Activated CD4-positive, alpha-beta T cell treated with anti-CD3 and anti-CD28 coated beads for 36 hours (primary cell): ENCODE measurements at regions of chr3 and their contacts with region 1.

Region 1: DNA sequence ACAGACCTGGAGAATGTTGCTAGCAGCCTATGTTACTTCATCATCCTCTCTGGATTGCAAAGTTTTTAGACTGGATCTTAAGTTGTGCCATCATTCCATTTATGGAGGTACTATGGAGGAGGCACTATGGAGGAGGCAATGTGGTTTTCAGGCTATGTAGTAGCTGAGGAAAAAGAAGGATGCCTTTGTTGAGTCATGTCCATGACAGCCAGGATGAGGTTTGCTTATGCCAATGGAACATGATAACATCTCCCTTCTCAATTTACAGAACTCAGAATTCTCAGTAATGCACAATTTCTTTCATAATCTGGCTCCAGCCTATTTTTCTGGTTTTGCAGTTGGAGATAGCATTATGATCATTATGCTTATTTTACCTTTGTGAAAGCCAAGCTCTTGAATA is 65.9 kb upstream of the TMEM108 start:
- DNase-seq: no peak
- ATAC-seq: no peak
- H3K4me3 Mint-ChIP-seq: no peak overlapping the region
- H3K27ac Mint-ChIP-seq: no peak overlapping the region
- H3K4me1 Mint-ChIP-seq: no peaks in the 10 kb centered on the region
- H3K27me3 Mint-ChIP-seq: peaks cover 3% of the 10 kb centered on the region

Region 2: DNA sequence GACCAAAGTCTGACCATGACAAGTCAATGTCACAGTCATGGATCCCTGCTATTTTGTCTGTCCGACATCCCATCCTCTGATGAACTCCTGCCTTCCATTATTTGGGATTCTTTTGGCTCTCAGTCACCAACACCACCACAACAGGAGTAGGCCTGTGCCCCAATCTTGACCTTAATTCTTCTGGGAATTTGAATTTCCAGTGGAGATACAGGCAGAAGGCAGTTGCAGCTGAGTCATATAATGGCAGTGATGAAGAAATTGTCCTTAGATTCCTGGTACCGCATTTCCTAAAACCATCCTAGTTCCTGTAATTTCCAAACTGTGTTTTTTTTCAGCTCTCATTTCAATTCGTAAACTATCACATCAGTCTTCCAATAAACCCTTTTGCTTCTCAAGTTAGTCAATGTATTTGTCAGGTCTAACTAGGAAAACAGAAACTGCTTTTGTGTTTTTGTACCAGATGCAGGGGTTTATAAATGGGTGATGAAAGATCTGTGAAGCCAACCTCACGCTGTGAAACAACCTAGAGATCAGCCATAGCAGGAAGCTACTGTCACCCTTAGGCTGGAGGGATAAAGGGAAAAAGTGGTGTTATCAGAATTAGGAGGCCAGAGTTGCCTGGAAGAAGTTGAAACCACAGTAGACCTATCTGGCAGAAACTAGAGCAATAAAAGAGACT is 60.5 kb before region 1 on chr3:
- CTCF ChIA-PET with region 1: no interaction called
- POLR2A ChIA-PET with region 1: interaction called, 10 read pairs
- intact Hi-C with region 1: no loop called
- DNase-seq: no peak
- ATAC-seq: no peak
- H3K4me3 Mint-ChIP-seq: no peak overlapping the region
- H3K27ac Mint-ChIP-seq: no peak overlapping the region
- H3K4me1 Mint-ChIP-seq: no peaks in the 10 kb centered on the region
- H3K27me3 Mint-ChIP-seq: no peaks in the 10 kb centered on the region